Colonic mucosa (tissue), 4 donors: ENCODE measurements at regions of chr19 and their contacts with region 1.

Region 1: GRCh38 chr19:29735800-29736199 is 20.7 kb upstream of the C19orf12 start:
- DNase-seq: no peak
- H3K4me3 ChIP-seq: no peak overlapping the region
- H3K27ac ChIP-seq: no peak overlapping the region
- H3K4me1 ChIP-seq: no peaks in the 10 kb centered on the region
- H3K27me3 ChIP-seq: no peaks in the 10 kb centered on the region
- CTCF ChIP-seq: no peak

Region 2: DNA sequence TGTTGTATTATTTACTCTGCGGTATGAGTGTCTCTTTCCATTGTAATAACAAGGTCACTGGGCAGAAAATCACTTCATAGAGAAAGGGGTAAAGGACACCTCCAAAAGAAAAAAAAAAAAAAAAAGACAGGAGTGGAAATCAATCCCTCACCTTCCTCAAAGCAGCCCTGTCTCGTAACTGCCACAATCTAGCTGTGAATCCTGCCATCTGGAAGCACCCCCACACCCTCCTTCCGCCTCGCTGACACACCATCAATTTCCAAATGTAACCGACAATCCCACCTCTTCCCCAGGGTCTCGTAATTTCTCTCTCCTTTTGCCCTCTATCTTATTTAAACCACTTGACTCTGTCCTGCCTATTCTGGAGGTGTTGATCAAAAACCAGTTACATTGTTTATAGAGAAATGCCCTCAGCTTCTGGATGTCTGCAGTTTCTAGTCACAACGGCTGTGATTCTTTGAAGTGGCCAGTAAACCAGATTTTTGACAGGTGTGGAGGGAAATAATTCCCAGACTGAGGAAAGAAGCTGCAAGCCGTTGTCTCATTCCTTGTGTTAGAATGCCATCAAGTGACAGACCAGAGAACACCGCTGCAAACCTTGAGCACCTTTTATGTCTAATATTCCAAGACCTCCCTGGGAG is 138.8 kb before region 1 on chr19:
- intact Hi-C with region 1: no loop called
- DNase-seq: no peak
- H3K4me3 ChIP-seq: no peak overlapping the region
- H3K27ac ChIP-seq: no peak overlapping the region
- H3K4me1 ChIP-seq: no peaks in the 10 kb centered on the region
- H3K27me3 ChIP-seq: no peaks in the 10 kb centered on the region
- CTCF ChIP-seq: no peak

Region 3: DNA sequence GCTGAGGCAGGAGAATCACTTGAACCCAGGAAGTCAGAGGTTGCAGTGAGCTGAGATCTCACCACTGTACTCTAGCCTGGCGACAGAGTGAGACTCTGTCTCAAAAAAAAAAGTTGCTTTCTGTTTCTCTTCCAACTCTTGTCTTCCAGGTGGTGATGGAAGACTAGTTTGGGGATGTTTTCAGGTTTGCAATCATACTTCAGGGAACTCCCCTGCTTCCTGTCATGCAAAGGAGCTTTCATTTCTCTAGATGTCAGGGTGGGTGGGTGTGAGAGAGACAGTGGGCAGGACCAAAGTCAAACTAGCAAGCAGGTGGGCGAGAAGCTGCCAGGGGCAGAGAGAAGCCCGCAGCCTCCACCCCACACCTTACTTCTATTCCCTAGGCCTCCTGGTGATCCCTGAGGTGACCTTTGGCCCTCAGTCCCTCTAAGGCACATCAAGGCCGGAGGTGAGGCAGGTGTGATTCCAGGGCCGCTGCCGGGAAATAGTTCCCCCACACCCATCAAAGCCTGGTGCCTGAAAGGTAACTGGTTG is 101.7 kb after region 1 on chr19:
- intact Hi-C with region 1: no loop called
- DNase-seq: no peak
- H3K4me3 ChIP-seq: no peak overlapping the region
- H3K27ac ChIP-seq: no peak overlapping the region
- H3K4me1 ChIP-seq: no peaks in the 10 kb centered on the region
- H3K27me3 ChIP-seq: no peaks in the 10 kb centered on the region
- CTCF ChIP-seq: no peak

Region 4: GRCh38 chr19:29873024-29873800 is 137.4 kb after region 1 on chr19:
- intact Hi-C with region 1: loop called (anchors 2 kb)
- DNase-seq: peak; percentile 51
- H3K4me3 ChIP-seq: peak overlapping the region; percentile 40
- H3K27ac ChIP-seq: no peak overlapping the region
- H3K4me1 ChIP-seq: peaks cover 9% of the 10 kb centered on the region
- H3K27me3 ChIP-seq: peaks cover 8% of the 10 kb centered on the region
- CTCF ChIP-seq: peak; percentile 77

Region 5: GRCh38 chr19:30649934-30650614 is 914.3 kb after region 1 on chr19:
- intact Hi-C with region 1: loop called (anchors 10 kb)
- DNase-seq: peak; percentile 25
- H3K4me3 ChIP-seq: no peak overlapping the region
- H3K27ac ChIP-seq: no peak overlapping the region
- H3K4me1 ChIP-seq: no peaks in the 10 kb centered on the region
- H3K27me3 ChIP-seq: no peaks in the 10 kb centered on the region
- CTCF ChIP-seq: peak; percentile 60